Spleen (tissue), 13 donors: ENCODE measurements at regions of chr11 and their contacts with region 1.

Region 1: DNA sequence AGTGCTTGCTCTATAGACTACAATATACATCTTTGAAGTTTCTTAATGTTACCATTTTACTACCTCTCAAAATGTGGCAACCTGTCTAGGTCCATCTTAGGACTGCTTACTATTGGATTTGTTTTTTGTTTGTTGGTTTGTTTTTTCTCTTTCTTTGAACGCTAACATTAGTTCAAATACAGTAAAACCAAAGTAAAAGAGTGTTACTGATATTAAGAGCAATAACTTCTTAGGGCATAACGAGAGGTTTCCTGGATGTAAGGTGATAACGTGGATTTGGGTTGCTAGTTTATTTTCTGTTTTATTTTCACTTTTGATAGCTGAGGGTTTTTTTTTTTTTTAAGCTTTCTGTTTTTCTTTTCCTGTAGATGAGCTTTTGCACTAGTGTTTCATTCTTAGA is 43.6 kb downstream of the TMEM135 start:
- DNase-seq: no peak
- H3K4me3 ChIP-seq: peak overlapping the region in 6 of 8 donors; percentile 17 to 57 (median 28)
- H3K27ac ChIP-seq: peak overlapping the region in 7 of 8 donors; percentile 21 to 65 (median 59)
- H3K4me1 ChIP-seq: peaks cover 0 to 27% (median 9%) of the 10 kb centered on the region in 6 donors
- H3K27me3 ChIP-seq: no peaks in the 10 kb centered on the region
- CTCF ChIP-seq: no peak
- POLR2A ChIP-seq: no peak

Region 2: GRCh38 chr11:86848861-86849260 is 232.5 kb before region 1 on chr11:
- intact Hi-C with region 1: no loop called
- DNase-seq: no peak
- H3K4me3 ChIP-seq: no peak overlapping the region
- H3K27ac ChIP-seq: no peak overlapping the region
- H3K4me1 ChIP-seq: no peaks in the 10 kb centered on the region
- H3K27me3 ChIP-seq: no peaks in the 10 kb centered on the region
- CTCF ChIP-seq: no peak
- POLR2A ChIP-seq: no peak

Region 3: DNA sequence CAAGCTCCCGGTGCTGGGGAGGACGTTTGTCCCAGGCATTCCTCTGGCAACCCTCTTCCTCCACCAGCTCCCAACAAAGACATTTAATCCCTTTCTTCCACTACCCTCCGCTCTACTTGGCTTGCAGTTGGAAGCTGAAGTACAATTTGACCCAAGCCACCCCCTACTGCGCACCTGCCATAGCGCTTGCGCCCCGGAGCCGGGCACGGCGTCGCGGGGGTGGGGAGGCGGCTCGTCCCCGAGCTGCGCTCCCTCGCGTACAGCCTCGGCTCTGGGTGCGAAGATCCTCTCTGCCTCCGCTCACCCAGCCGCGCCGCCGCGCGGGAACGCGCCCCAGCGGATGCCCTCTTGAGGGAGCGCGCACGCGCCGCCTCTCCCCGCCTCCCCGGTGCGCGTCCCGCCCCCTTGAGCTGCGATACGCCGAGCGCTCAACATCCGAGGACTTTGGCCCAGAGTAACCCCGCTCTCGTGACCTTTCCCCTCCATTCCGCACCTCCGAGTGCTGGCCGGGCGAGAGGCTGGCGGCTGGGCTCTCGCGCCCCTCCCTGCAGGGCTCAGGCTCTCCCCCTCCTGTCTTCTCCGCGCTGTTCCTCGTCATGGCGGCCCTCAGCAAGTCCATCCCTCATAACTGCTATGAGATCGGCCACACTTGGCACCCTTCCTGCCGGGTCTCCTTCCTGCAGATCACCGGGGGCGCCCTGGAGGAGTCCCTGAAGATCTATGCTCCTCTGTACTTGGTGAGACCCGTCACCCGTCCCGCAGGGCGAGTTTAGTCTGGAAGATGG is 43.7 kb before region 1 on chr11 and contains the start of gene TMEM135:
- intact Hi-C with region 1: loop called (anchors 10 kb)
- DNase-seq: peak; percentile 98
- H3K4me3 ChIP-seq: peak within 1 kb of the TSS; percentile 49 to 82 (median 74)
- H3K27ac ChIP-seq: peak within 1 kb of the TSS; percentile 37 to 90 (median 82)
- H3K4me1 ChIP-seq: peaks cover 0 to 51% (median 30%) of the 10 kb centered on the region in 6 donors
- H3K27me3 ChIP-seq: no peaks in the 10 kb centered on the region
- CTCF ChIP-seq: peak in 4 of 11 experiments; percentile 14 to 32 (median 15)
- POLR2A ChIP-seq: peak in 1 of 3 donors; percentile 65
- total RNA-seq, gene TMEM135: 18.5 to 31.7 (median 22.9) TPM